ENCODE measurements at regions of chr11 and their contacts with region 1.

Region 1: DNA sequence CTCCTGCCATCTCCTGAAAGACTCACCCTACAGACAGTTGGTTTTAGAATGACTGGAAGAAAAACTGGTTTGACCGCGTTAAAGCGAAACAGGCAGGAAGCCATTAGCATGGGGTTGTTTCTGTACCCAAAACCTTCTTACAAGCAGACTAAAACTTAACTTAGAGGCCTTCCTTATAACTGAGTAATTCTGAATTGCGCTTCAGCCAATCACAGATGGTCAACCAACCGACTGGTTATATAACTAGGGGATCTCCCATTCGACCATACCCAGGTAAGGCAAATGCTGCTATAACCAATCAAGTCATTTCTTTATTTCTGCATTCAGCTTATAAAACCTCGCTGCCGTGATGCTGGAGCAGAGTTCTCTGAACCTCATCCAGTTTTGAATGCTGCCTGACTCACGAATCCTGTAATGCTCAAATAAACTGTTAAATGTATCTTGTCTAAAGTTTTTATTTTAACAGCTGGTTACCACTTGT is 87.8 kb upstream of the DRD2 start:
- DNase-seq: no peak
- H3K4me3 ChIP-seq: no peak overlapping the region
- H3K27ac ChIP-seq: no peak overlapping the region
- H3K4me1 ChIP-seq: peaks cover 2 to 17% (median 7%) of the 10 kb centered on the region in 4 experiments
- H3K27me3 ChIP-seq: no peaks in the 10 kb centered on the region
- CTCF ChIP-seq: no peak
- EP300 ChIP-seq: no peak
- POLR2A ChIP-seq: no peak
- RAD21 ChIP-seq: no peak

Region 2: GRCh38 chr11:113577356-113578032 is 14.5 kb after region 1 on chr11:
- CTCF ChIA-PET with region 1: interaction called, 10 read pairs
- POLR2A ChIA-PET with region 1: interaction called, 6 read pairs
- DNase-seq: peak in 1 of 2 experiments; percentile 43
- H3K4me3 ChIP-seq: no peak overlapping the region
- H3K27ac ChIP-seq: no peak overlapping the region
- H3K4me1 ChIP-seq: peaks cover 5 to 24% (median 12%) of the 10 kb centered on the region in 4 experiments
- H3K27me3 ChIP-seq: no peaks in the 10 kb centered on the region
- CTCF ChIP-seq: no peak
- EP300 ChIP-seq: no peak
- POLR2A ChIP-seq: no peak
- RAD21 ChIP-seq: no peak